Lower leg skin (tissue), 4 donors: ENCODE measurements at regions of chr5 and their contacts with region 1.

Region 1: GRCh38 chr5:7754992-7755596 is 95.8 kb downstream of the CFAP90 start:
- DNase-seq: no peak
- H3K4me3 ChIP-seq: no peak overlapping the region
- CTCF ChIP-seq: no peak
- POLR2A ChIP-seq: no peak

Region 2: DNA sequence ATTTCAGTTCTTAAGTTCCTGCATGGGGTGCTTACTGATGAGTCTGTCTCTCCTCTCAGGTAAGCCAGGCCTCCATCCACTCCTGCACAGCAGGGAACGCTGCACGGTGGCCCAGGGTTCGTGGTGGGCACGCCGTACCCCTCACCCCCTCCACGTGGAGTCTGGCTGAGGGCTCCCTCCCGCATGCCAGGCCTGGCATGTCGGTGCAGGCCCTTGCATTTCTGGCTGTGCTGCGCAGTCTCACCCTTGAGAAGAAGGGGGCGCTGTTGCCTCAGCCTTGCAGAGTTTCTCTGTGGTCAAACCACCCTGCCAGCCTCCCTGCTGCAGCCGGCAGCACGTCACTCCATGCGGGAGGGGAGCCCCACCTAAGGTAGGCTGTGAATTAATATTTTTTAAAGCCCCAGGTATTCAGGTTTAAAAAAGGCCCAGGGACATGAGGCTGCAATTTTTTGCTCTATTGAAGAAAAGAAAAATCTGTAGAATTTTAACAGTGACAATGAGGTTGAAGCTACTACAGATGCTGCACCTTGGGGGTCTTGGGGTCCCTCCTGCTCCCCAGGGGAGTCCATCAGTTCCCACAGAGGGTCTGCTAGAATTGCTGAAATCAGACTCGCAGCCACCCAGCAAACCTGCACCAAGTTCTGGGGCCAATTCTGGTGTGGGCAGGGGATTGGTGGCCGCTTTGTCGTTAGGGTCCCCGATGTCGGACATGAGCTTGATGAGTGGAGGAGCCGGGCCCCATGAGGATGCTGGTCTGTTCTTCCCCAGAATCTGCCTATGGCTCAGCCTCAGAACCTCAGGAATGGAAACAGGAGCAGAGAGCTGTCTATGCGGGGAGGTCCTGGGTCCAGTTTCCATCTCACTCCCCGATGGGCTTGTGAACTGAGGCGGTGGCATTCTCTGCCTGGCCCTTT is 989.2 kb before region 1 on chr5:
- intact Hi-C with region 1: loop called (anchors 10 kb)
- DNase-seq: peak; percentile 69 to 95
- H3K4me3 ChIP-seq: no peak overlapping the region
- CTCF ChIP-seq: no peak
- POLR2A ChIP-seq: no peak

Region 3: GRCh38 chr5:7705241-7705640 is 49.9 kb before region 1 on chr5:
- intact Hi-C with region 1: no loop called
- DNase-seq: no peak
- H3K4me3 ChIP-seq: no peak overlapping the region
- CTCF ChIP-seq: no peak
- POLR2A ChIP-seq: no peak

Region 4: DNA sequence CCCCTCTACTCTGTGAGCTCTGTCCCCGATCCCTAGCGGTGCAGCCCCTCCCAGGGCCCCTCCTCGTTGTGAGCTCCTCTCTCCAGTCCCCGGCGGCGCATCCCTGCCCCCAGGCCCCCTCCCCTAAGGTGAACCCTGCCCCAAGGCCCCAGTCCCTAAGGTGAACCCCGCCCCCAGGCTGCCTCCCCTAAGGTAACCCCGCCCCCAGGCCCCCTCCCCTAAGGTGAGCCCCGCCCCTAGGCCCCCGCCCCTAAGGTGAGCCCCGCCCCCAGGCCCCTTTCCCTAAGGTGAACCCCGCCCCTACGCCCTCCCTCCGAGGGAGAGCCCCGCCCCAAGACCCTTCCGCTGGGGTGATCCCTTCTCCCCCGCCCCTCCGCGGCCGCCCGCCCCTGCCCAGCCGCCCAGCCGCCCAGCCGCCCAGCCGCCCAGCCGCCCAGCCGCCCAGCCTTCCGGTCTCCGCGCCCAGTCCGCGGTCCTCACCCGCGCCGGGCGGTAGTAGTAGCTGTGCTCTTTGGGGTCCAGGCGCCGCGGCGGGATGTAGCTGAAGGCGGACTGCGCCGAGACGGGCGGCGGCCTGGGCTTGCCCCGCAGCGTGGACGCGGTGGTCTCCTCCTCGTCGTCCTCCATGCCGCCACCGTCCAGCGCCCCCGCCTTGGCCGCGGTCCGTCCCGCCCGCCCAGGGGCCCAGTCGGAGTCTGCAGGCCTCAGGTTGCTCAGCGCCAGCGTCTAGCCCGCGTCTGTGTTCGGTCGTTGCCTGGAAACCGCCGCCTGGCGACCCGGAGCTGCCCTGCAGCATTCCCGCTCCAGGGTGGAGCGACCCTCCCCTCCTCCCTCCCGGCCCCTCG is 95.5 kb after region 1 on chr5 and contains the start of gene CFAP90:
- intact Hi-C with region 1: no loop called
- DNase-seq: no peak
- H3K4me3 ChIP-seq: no peak within 1 kb of the TSS
- CTCF ChIP-seq: no peak
- POLR2A ChIP-seq: no peak
- total RNA-seq, gene CFAP90: 0.21 to 0.32 TPM in 2 of 4 donors, not detected in the others

Region 5: GRCh38 chr5:8842971-8843551 is 1088.0 kb after region 1 on chr5:
- intact Hi-C with region 1: no loop called
- DNase-seq: no peak
- H3K4me3 ChIP-seq: no peak overlapping the region
- CTCF ChIP-seq: no peak
- POLR2A ChIP-seq: no peak